Left cardiac atrium (tissue), 4 donors: ENCODE measurements at regions of chr10 and their contacts with region 1.

Region 1: GRCh38 chr10:122051251-122051996 is 62.5 kb downstream of the TACC2 start:
- DNase-seq: peak; percentile 54
- ATAC-seq: peak; percentile 30 to 57

Region 2: DNA sequence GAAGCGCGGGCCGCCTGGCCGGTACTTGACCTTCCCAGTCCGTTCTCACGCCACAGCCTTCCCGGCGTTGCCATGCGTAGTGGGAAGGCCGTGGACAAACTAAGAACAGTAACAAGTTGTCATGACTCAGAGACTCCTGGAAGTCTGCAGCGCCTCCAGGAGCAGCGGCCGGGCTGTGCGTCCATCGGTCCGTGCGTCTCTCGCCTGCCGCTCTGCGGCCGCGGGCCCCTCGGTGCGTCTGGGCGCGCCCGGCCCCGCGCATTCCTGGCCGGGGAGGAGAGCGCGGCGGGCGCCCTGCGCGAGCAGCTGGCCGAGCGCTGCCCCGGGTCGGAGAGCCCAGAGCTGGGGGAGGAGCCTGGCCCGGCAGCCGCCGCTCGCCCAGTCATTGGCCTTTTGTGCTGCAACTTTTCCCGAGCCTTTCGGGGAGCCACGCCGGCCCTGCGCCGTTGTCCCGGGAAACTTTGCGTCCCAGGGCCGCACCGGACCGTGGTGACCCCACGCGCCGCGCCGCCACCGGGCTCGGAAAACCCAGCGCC is 61.3 kb after region 1 on chr10:
- intact Hi-C with region 1: loop called (anchors 5 to 10 kb)
- DNase-seq: peak; percentile 92
- ATAC-seq: peak; percentile 91 to 94

Region 3: DNA sequence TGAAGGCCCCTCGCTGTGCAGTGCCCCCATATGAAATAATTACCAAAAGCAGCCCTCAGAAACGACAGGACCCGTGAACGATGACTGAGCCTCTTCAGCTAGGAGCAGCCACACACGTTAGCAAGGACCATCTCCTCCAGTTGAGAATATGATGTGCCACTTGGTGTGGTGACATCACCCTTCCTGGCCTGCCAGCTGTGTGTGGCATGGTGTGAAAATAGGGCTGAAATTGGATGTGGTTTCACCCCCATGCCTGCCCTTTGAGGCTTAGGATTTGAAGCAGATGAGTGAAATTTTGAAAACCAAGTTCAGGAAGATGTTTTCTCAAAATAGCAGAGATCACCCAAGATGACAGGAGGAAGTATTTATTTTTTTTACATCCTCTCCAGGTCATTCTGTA is 170.5 kb after region 1 on chr10:
- intact Hi-C with region 1: loop called in 1 of 2 experiments (anchors 10 kb)
- DNase-seq: no peak
- ATAC-seq: peak in 1 of 2 donors; percentile 56

Region 4: DNA sequence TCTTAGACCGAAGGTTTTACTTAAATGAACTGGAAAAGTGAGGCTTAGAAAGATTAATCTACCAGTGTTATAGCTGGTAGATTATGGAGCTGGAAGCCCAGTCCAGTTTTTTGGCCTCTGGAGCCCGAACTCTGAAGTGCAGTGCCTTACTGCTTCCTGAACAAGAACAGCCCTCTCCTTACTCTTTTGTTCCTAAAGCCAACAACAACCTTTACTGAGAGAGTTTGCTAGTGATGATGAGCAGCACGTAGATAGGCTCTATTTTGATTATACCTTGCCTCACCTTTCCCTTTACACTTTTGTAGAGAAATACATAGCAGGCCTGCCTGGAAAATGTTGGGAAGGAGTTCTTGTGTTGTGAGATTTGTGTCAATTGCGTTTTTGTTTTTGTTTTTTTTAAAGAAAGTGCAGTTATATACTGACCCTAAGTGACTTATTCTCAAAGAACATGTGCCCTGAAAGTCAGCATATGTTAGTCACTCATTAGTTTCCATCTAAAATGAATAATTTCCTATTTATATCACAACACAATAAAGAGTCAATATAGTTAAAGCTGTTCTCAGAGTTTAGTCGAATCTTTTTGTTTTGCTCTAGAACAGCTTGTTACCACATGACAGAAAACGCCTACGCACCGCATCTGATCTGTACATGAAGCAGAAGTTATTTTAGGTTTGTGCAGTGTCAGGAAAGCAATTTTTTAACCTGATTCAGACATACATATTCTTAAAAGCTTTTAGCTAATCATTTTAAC is 356.1 kb after region 1 on chr10:
- intact Hi-C with region 1: no loop called
- DNase-seq: no peak
- ATAC-seq: no peak